CD14-positive monocyte (primary cell): ENCODE measurements at regions of chr19 and their contacts with region 1.

Region 1: GRCh38 chr19:56252699-56253422 is 19.7 kb upstream of the EDDM13 start:
- DNase-seq: peak; percentile 69 to 75 (median 72)
- H3K4me3 ChIP-seq: no peak overlapping the region
- H3K4me3 Mint-ChIP-seq: peak overlapping the region in 1 of 2 donors; percentile 48
- H3K27ac ChIP-seq: no peak overlapping the region
- H3K27ac Mint-ChIP-seq: peak overlapping the region in 1 of 7 donors; percentile 70
- H3K4me1 ChIP-seq: no peaks in the 10 kb centered on the region
- H3K4me1 Mint-ChIP-seq: peaks cover 3% of the 10 kb centered on the region
- H3K27me3 ChIP-seq: no peaks in the 10 kb centered on the region
- H3K27me3 Mint-ChIP-seq: no peaks in the 10 kb centered on the region
- CTCF ChIP-seq: peak; percentile 86

Region 2: DNA sequence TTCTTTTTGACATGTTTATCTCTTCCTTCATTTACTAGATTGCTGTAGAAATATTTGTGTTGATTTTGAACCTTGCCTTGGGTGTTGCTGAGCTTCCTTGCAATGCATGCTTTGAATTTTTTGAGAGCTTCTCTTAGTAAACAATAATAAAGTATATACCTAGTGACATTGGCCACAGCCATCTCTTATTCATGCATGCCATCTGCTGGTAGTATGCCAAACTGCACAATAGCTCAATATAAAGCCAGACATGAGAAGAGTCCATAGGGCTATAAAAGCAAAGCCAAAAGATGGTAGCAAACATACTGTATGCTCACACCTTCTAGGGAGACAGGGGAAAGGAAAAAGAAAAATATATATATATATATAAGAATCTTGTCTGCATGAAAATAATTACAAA is 80.6 kb after region 1 on chr19:
- intact Hi-C with region 1: loop called (anchors 1 to 5 kb)
- DNase-seq: peak; percentile 65 to 76 (median 67)
- H3K4me3 ChIP-seq: no peak overlapping the region
- H3K4me3 Mint-ChIP-seq: no peak overlapping the region
- H3K27ac ChIP-seq: no peak overlapping the region
- H3K27ac Mint-ChIP-seq: no peak overlapping the region
- H3K4me1 ChIP-seq: no peaks in the 10 kb centered on the region
- H3K4me1 Mint-ChIP-seq: peaks cover 2% of the 10 kb centered on the region
- H3K27me3 ChIP-seq: no peaks in the 10 kb centered on the region
- H3K27me3 Mint-ChIP-seq: peaks cover 0 to 4% (median 0%) of the 10 kb centered on the region in 3 donors
- CTCF ChIP-seq: peak; percentile 93